ENCODE measurements at regions of chr2 and their contacts with region 1.

Region 1: GRCh38 chr2:9142551-9143263 is 63.9 kb upstream of the ASAP2 start:
- DNase-seq: no peak
- ATAC-seq: peak; percentile 94
- H3K4me3 ChIP-seq: no peak overlapping the region; the same call in 1 of the 2 replicates
- H3K27ac ChIP-seq: no peak overlapping the region
- H3K4me1 ChIP-seq: no peaks in the 10 kb centered on the region
- H3K27me3 ChIP-seq: no peaks in the 10 kb centered on the region; a peak in 1 of 4 replicates
- CTCF ChIP-seq: peak; percentile 90 to 98 (median 96)
- EP300 ChIP-seq: no peak
- POLR2A ChIP-seq: no peak
- RAD21 ChIP-seq: peak; percentile 90

Region 2: DNA sequence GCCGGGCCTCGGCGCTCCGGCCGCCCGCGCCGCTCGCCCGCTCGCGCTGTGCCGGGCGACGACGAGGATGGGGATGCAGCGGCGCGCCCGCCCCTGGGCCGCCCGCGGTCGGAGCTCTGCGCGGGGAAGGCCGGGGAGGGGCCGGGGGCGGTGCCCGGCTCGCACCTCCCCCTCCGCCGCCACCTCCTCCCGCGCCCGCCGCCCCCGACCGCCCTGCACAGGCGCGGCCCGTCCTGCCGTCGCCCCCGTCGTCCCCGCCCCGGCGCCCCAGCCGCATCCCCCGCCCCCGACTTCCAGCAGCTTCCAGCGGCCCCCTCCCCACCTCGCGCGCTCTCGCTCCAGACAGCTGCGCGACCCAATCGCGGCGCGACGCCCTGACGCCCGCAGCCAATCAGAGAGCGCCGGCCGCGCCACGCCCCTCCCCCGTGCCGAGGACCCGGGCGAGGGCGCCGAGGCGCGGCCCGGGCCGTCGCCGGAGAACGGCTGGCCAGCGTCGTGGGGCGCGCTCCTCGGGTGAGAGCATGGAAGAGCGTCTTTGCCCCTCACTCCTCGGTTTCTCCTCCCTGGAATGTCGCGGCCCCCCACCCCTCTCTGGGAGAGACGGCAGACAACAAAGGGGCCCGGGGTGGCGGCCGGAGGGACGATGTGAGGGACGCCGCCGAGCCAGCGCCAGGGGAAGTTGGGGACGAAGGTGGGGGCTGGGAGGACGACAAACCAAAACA is 138.9 kb before region 1 on chr2 and contains the start of gene MBOAT2:
- CTCF ChIA-PET with region 1: interaction called, 3 read pairs
- POLR2A ChIA-PET with region 1: no interaction called
- RAD21 ChIA-PET with region 1: no interaction called
- SMC1A ChIA-PET with region 1: interaction called, 4 read pairs
- in situ Hi-C with region 1: no loop called
- intact Hi-C with region 1: loop called (anchors 2 kb)
- DNase-seq: peak; percentile 43
- ATAC-seq: peak; percentile 92
- H3K4me3 ChIP-seq: peak within 1 kb of the TSS; percentile 71
- H3K27ac ChIP-seq: peak within 1 kb of the TSS; percentile 66
- H3K4me1 ChIP-seq: no peaks in the 10 kb centered on the region; the same call in 1 of the 2 replicates
- H3K27me3 ChIP-seq: no peaks in the 10 kb centered on the region; a peak in 1 of 4 replicates
- CTCF ChIP-seq: no peak
- EP300 ChIP-seq: no peak
- POLR2A ChIP-seq: peak; percentile 79
- RAD21 ChIP-seq: no peak
- polyA plus RNA-seq, gene MBOAT2: 0.08 to 1.3 TPM

Region 3: DNA sequence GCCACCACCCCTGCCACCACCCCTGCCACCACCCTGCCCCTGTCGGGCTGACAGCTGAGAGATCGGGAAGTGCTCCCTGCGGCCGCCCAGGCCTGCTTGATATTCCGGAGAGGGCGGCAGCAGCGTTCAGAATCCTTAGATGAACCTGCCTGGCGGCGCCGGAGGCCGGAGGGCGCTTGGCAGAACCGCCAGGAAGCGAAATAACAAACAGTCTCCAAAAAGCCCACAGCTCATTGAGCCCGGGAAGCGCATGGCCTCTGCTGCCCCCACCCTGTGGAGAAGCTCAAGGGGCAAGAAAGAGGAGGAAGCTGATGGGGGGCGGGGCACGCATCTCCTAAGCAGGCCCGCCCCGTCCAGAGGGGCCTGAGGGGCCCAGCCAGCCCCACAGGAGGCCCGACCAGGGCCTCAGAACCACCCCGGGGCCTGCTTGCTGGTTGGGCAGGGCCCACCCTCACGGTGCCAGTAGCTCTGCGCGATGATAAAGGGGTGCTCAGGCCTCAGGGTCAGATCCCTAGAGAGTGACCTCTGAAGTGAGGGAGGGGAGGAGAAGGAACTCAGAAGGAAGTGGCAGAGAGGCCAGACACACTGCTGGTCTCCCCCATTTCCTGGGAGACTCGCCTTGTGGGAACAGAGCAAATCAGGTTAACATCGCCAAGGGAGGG is 46.9 kb before region 1 on chr2:
- CTCF ChIA-PET with region 1: interaction called, 10 read pairs
- POLR2A ChIA-PET with region 1: no interaction called
- RAD21 ChIA-PET with region 1: interaction called, 7 read pairs
- SMC1A ChIA-PET with region 1: interaction called, 8 read pairs
- in situ Hi-C with region 1: no loop called
- intact Hi-C with region 1: loop called (anchors 2 kb)
- DNase-seq: no peak
- ATAC-seq: no peak
- H3K4me3 ChIP-seq: no peak overlapping the region
- H3K27ac ChIP-seq: no peak overlapping the region
- H3K4me1 ChIP-seq: peaks cover 42% of the 10 kb centered on the region
- H3K27me3 ChIP-seq: no peaks in the 10 kb centered on the region
- CTCF ChIP-seq: 0 out of 6 replicates have a peak, but pooled peaks of 1 of the 3 experiments have one; percentile 5
- EP300 ChIP-seq: no peak
- POLR2A ChIP-seq: no peak
- RAD21 ChIP-seq: no peak

Region 4: GRCh38 chr2:9205963-9206948 is 63.5 kb after region 1 on chr2 and contains the start of gene ASAP2:
- CTCF ChIA-PET with region 1: interaction called, 3 read pairs
- POLR2A ChIA-PET with region 1: no interaction called
- RAD21 ChIA-PET with region 1: no interaction called
- SMC1A ChIA-PET with region 1: interaction called, 6 read pairs
- in situ Hi-C with region 1: no loop called
- intact Hi-C with region 1: loop called (anchors 5 kb)
- DNase-seq: no peak
- ATAC-seq: peak; percentile 85
- H3K4me3 ChIP-seq: peak within 1 kb of the TSS; percentile 71
- H3K27ac ChIP-seq: no peak within 1 kb of the TSS
- H3K4me1 ChIP-seq: 0 out of 2 replicates have a peak, but pooled peaks cover 4% of the 10 kb centered on the region
- H3K27me3 ChIP-seq: peaks cover 4 to 15% of the 10 kb centered on the region in 2 experiments
- CTCF ChIP-seq: peak; percentile 50 to 65 (median 58)
- EP300 ChIP-seq: no peak
- POLR2A ChIP-seq: no peak
- RAD21 ChIP-seq: peak; percentile 21; the same call in 1 of the 2 replicates
- polyA plus RNA-seq, gene ASAP2: 0.05 TPM in 1 of 2 experiments, not detected in the other

Region 5: DNA sequence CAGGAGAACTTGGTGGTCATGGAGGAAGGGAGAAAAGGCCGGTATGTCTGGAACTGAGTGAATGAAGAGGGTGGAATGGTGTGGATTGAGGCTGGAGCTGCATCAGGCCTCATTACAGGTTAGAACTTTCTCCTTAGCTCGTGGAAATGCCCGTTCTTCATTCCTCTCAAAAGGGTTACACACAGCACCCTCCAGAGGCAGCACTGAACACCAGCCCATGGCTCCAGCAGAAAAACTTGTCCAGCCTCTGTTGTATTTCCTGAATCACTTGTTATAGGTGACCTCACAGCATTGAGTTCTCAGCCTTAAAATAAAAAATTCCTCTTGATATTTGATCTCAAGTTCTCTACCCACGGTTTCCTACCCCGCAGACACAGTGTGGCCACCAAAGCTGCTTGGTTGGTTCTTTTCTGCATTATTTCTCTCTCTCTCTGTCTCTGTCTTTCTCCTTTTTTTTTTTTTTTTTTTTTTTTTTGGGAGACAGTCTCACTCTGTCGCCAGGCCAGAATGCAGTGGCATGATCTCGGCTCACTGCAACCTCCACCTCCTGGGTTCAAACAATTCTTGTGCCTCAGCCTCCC is 191.0 kb after region 1 on chr2:
- CTCF ChIA-PET with region 1: interaction called, 9 read pairs
- POLR2A ChIA-PET with region 1: no interaction called
- RAD21 ChIA-PET with region 1: interaction called, 3 read pairs
- SMC1A ChIA-PET with region 1: interaction called, 4 read pairs
- in situ Hi-C with region 1: no loop called
- intact Hi-C with region 1: loop called (anchors 10 kb)
- DNase-seq: no peak
- ATAC-seq: peak; percentile 70
- H3K4me3 ChIP-seq: no peak overlapping the region
- H3K27ac ChIP-seq: no peak overlapping the region
- H3K4me1 ChIP-seq: no peaks in the 10 kb centered on the region; the same call in 1 of the 2 replicates
- H3K27me3 ChIP-seq: no peaks in the 10 kb centered on the region; a peak in 2 of 4 replicates
- CTCF ChIP-seq: peak; percentile 38 to 59 (median 49); a peak in 4 of 6 replicates
- EP300 ChIP-seq: no peak
- POLR2A ChIP-seq: no peak
- RAD21 ChIP-seq: peak; percentile 12; the same call in 1 of the 2 replicates

Region 6: DNA sequence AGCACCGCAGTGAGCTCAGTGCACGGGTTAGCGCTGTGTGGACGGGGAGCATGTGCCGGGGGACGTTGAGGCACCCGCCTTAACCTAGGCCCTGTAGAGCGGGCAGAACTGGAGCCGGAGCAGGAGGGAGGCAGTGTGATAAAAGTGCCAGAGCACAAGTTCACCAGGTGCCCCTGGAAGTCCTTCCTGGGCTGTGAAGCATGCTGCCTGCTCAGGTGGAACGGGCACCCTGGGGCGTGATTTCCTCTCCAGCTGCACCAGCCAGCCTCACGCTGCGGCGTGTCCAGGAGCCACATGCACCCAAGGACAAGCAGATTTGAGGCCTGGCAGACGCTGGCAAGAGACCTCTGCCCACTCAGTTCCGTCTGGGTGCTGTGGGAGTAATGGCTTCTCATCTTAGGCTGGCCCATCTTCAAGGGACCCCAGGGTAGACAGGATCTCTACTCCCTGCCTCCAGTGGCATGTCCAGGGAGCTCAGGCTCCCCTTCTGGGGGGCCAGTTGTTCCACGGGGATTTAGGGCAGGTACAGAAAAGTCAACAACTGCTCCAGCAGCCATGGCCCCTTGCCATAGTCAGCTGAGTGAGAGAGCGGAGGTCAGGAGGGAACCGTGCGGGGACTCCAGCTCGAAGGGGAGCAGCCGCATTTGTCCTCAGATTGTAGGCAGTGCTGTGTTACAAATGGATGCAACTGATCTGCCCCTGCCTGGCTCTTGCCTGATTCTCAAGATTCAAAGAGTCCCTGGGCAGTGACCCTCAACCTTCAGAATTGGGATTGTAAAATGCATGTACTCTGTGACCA is 230.6 kb after region 1 on chr2:
- CTCF ChIA-PET with region 1: interaction called, 30 read pairs
- POLR2A ChIA-PET with region 1: no interaction called
- RAD21 ChIA-PET with region 1: interaction called, 15 read pairs
- SMC1A ChIA-PET with region 1: interaction called, 5 read pairs
- in situ Hi-C with region 1: loop called (anchors 5 kb)
- intact Hi-C with region 1: loop called (anchors 1 kb)
- DNase-seq: no peak
- ATAC-seq: peak; percentile 54
- H3K4me3 ChIP-seq: no peak overlapping the region
- H3K27ac ChIP-seq: no peak overlapping the region
- H3K4me1 ChIP-seq: no peaks in the 10 kb centered on the region
- H3K27me3 ChIP-seq: no peaks in the 10 kb centered on the region; a peak in 2 of 4 replicates
- CTCF ChIP-seq: no peak
- EP300 ChIP-seq: no peak
- POLR2A ChIP-seq: no peak
- RAD21 ChIP-seq: no peak

Measured in GM12878 (cell line).